ENCODE measurements at regions of chr7 and their contacts with region 1.

Region 1: DNA sequence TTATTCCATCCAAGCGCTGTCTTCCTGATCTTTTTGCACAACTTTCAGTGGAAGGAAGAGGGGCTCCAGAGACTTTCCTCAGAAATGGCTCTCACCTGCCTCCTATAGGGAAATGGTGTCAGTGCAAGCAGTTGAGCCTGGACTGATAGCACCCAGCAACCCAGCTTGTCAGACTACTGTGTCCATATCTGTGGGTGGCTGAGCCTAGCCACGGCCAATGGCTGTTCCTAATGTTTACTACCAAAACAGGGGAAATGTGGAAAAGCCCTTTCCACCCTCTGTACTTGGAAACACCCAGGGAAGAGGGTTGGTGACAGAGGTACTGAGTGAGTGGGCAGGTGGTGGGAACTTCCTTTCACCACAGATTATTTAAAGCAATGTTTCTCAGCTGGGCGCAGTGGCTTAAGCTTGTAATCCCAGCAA is 4.3 kb upstream of the YKT6 start:
- DNase-seq: peak; percentile 70
- CTCF ChIP-seq: peak; percentile 77

Region 2: GRCh38 chr7:44072364-44073231 is 123.9 kb before region 1 on chr7:
- in situ Hi-C with region 1: loop called (anchors 10 kb)
- DNase-seq: peak; percentile 62
- CTCF ChIP-seq: peak; percentile 70

Measured in GM13977 (cell line).